MCF 10A (cell line): ENCODE measurements at regions of chr1 and their contacts with region 1.

Region 1: GRCh38 chr1:222009105-222009730 is 267.3 kb upstream of the DUSP10 start:
- DNase-seq: peak; percentile 77
- H3K4me3 Mint-ChIP-seq: no peak overlapping the region
- H3K27ac Mint-ChIP-seq: peak overlapping the region; percentile 24
- H3K4me1 Mint-ChIP-seq: no peaks in the 10 kb centered on the region
- H3K27me3 Mint-ChIP-seq: no peaks in the 10 kb centered on the region
- CTCF ChIP-seq: peak; percentile 86

Region 2: DNA sequence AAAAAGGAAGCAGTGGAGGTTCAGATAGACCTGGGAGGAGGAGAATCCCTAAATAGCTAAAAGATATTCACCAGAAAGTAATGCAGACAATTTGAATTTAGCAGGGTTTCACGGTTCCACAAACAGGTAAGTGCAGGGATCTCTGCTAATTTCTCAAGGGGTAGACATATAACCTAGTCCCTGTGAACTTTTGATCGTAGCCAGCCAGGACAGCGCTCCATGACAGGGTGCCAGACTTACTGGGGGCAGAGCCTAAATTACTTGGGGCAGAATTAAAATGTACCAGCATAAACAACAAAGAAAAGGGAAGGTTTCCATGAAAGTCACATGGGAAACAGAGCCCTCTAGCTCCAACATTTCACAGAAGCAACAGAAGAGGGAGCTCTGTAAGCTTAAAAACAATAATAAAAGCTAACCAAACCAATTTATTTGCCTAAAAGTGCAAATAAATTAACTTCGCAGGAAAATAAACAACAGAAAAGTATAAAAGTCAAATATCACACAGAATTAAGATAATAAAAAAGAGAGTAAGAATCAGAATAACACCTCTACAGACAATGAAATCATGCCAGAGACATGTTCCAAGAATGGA is 465.6 kb before region 1 on chr1:
- CTCF ChIA-PET with region 1: interaction called, 10 read pairs
- POLR2A ChIA-PET with region 1: no interaction called
- intact Hi-C with region 1: loop called (anchors 1 kb)
- DNase-seq: peak; percentile 56
- H3K4me3 Mint-ChIP-seq: no peak overlapping the region
- H3K27ac Mint-ChIP-seq: peak overlapping the region; percentile 44
- H3K4me1 Mint-ChIP-seq: peaks cover 15% of the 10 kb centered on the region
- H3K27me3 Mint-ChIP-seq: no peaks in the 10 kb centered on the region
- CTCF ChIP-seq: peak; percentile 86

Region 3: GRCh38 chr1:221979461-221980032 is 29.7 kb before region 1 on chr1:
- CTCF ChIA-PET with region 1: interaction called, 16 read pairs
- POLR2A ChIA-PET with region 1: interaction called, 4 read pairs
- intact Hi-C with region 1: no loop called
- DNase-seq: peak; percentile 54
- H3K4me3 Mint-ChIP-seq: no peak overlapping the region
- H3K27ac Mint-ChIP-seq: no peak overlapping the region
- H3K4me1 Mint-ChIP-seq: peaks cover 21% of the 10 kb centered on the region
- H3K27me3 Mint-ChIP-seq: no peaks in the 10 kb centered on the region
- CTCF ChIP-seq: peak; percentile 72

Region 4: GRCh38 chr1:221994274-221994698 is 14.9 kb before region 1 on chr1:
- CTCF ChIA-PET with region 1: interaction called, 32 read pairs
- POLR2A ChIA-PET with region 1: interaction called, 9 read pairs
- intact Hi-C with region 1: no loop called
- DNase-seq: no peak
- H3K4me3 Mint-ChIP-seq: no peak overlapping the region
- H3K27ac Mint-ChIP-seq: no peak overlapping the region
- H3K4me1 Mint-ChIP-seq: peaks cover 44% of the 10 kb centered on the region
- H3K27me3 Mint-ChIP-seq: no peaks in the 10 kb centered on the region
- CTCF ChIP-seq: no peak

Region 5: GRCh38 chr1:222026280-222026679 is 17.1 kb after region 1 on chr1:
- CTCF ChIA-PET with region 1: interaction called, 10 read pairs
- POLR2A ChIA-PET with region 1: no interaction called
- intact Hi-C with region 1: no loop called
- DNase-seq: no peak
- H3K4me3 Mint-ChIP-seq: no peak overlapping the region
- H3K27ac Mint-ChIP-seq: no peak overlapping the region
- H3K4me1 Mint-ChIP-seq: no peaks in the 10 kb centered on the region
- H3K27me3 Mint-ChIP-seq: no peaks in the 10 kb centered on the region
- CTCF ChIP-seq: no peak

Region 6: GRCh38 chr1:222165629-222166028 is 156.4 kb after region 1 on chr1:
- CTCF ChIA-PET with region 1: interaction called, 10 read pairs
- POLR2A ChIA-PET with region 1: no interaction called
- intact Hi-C with region 1: loop called (anchors 5 kb)
- DNase-seq: no peak
- H3K4me3 Mint-ChIP-seq: no peak overlapping the region
- H3K27ac Mint-ChIP-seq: no peak overlapping the region
- H3K4me1 Mint-ChIP-seq: peaks cover 16% of the 10 kb centered on the region
- H3K27me3 Mint-ChIP-seq: no peaks in the 10 kb centered on the region
- CTCF ChIP-seq: no peak

Region 7: GRCh38 chr1:222266223-222267196 is 257.3 kb after region 1 on chr1:
- CTCF ChIA-PET with region 1: no interaction called
- POLR2A ChIA-PET with region 1: no interaction called
- intact Hi-C with region 1: no loop called
- DNase-seq: no peak
- H3K4me3 Mint-ChIP-seq: no peak overlapping the region
- H3K27ac Mint-ChIP-seq: no peak overlapping the region
- H3K4me1 Mint-ChIP-seq: no peaks in the 10 kb centered on the region
- H3K27me3 Mint-ChIP-seq: no peaks in the 10 kb centered on the region
- CTCF ChIP-seq: no peak